SK-N-SH (cell line): ENCODE measurements at regions of chr7 and their contacts with region 1.

Region 1: DNA sequence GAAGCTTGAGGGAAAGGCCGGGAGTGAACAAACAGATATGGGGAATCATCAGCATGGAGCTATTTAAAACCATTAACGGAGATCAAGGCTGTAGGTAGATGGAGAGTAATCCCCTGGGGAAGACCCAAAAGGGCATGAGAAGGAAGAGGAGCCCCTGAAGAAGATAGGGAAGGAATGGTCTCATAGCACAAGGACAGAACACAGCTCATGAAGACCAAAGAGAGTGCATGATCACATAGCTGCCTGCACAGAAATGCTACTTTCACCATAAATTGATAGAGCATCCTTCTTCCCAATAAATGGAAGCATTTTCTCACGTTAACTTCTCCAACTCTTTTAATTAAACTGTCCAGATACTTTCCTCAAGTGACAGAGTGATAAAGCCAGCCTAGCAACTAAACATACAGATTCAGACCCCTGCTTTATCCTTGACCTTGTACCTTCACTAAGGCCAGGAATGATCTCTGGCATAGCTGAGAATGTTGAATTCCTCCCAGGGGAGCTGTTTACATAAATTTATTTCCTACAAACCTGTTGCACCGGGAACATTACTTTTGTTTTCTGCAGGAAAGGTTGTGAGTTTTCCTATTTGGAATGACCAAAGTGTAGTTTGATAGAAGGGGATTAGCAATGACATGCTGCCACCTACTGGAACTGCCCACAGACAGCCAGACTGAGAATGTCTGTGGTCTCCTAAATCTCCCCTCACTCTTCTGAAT is 110.8 kb upstream of the LRGUK start:
- DNase-seq: peak; percentile 67
- H3K4me3 ChIP-seq: peak overlapping the region in 1 of 2 experiments; percentile 17; a peak in 1 of 4 replicates
- H3K27ac ChIP-seq: peak overlapping the region in 1 of 2 experiments; percentile 95; a peak in 2 of 4 replicates
- H3K4me1 ChIP-seq: peaks cover 0 to 25% of the 10 kb centered on the region in 2 experiments; a peak in 2 of 4 replicates
- H3K27me3 ChIP-seq: no peaks in the 10 kb centered on the region
- CTCF ChIP-seq: peak; percentile 95
- EP300 ChIP-seq: peak in 1 of 2 experiments; percentile 55; a peak in 1 of 4 replicates
- RAD21 ChIP-seq: peak; percentile 99

Region 2: DNA sequence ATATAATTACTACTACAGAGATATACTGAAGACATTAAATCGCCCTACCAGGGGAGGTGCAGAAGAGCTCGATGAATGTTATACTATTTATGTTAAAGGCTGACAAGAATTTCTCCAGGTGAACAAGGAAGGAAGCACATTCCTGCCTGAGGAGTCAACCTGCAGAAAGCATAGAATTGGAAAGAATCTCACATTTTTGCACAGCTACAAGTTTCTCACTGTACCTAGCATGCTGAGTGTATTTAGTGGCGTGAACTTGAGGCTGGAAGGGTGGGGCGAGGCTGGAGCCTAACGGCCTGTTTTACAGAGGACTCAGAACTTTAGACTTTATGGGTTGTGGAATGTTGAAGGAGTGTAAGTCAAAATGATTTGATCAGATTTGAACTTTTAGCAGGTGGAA is 262.9 kb before region 1 on chr7:
- CTCF ChIA-PET with region 1: interaction called, 31 read pairs
- POLR2A ChIA-PET with region 1: no interaction called
- DNase-seq: no peak
- H3K4me3 ChIP-seq: no peak overlapping the region
- H3K27ac ChIP-seq: peak overlapping the region in 1 of 2 experiments; percentile 100; a peak in 2 of 4 replicates
- H3K4me1 ChIP-seq: peaks cover 0 to 24% of the 10 kb centered on the region in 2 experiments; a peak in 2 of 4 replicates
- H3K27me3 ChIP-seq: no peaks in the 10 kb centered on the region
- CTCF ChIP-seq: no peak
- EP300 ChIP-seq: no peak
- RAD21 ChIP-seq: no peak

Region 3: DNA sequence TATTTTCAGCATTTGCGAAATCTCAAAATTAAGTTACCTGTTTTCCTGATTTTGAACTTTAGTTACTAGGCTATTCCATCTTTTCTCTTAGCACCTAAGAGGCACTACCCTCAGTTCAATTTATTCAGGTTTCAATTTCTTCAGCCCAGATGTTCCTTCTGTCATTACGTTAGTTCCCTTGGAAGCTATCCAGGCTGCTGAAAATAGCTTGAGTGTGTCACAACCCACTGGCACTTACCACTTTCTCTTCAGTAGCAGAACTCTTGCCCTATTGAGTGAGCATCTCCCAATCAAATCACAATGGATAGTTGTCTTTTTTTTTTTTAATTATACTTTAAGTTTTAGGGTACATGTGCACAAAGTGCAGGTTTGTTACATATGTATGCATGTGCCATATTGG is 221.9 kb before region 1 on chr7:
- CTCF ChIA-PET with region 1: interaction called, 56 read pairs
- POLR2A ChIA-PET with region 1: interaction called, 6 read pairs
- DNase-seq: no peak
- H3K4me3 ChIP-seq: no peak overlapping the region
- H3K27ac ChIP-seq: peak overlapping the region in 1 of 2 experiments; percentile 100; a peak in 2 of 4 replicates
- H3K4me1 ChIP-seq: peaks cover 11 to 49% of the 10 kb centered on the region in 2 experiments; a peak in 3 of 4 replicates
- H3K27me3 ChIP-seq: no peaks in the 10 kb centered on the region
- CTCF ChIP-seq: no peak
- EP300 ChIP-seq: peak in 1 of 2 experiments; percentile 40; a peak in 1 of 4 replicates
- RAD21 ChIP-seq: no peak

Region 4: GRCh38 chr7:133853706-133854276 is 162.6 kb before region 1 on chr7:
- CTCF ChIA-PET with region 1: interaction called, 39 read pairs
- POLR2A ChIA-PET with region 1: interaction called, 5 read pairs
- DNase-seq: peak; percentile 72
- H3K4me3 ChIP-seq: peak overlapping the region in 1 of 2 experiments; percentile 7; a peak in 2 of 4 replicates
- H3K27ac ChIP-seq: peak overlapping the region; percentile 85 to 98
- H3K4me1 ChIP-seq: peaks cover 30 to 53% of the 10 kb centered on the region in 2 experiments
- H3K27me3 ChIP-seq: no peaks in the 10 kb centered on the region
- CTCF ChIP-seq: peak; percentile 94
- EP300 ChIP-seq: peak; percentile 47 to 88
- RAD21 ChIP-seq: peak; percentile 78

Region 5: DNA sequence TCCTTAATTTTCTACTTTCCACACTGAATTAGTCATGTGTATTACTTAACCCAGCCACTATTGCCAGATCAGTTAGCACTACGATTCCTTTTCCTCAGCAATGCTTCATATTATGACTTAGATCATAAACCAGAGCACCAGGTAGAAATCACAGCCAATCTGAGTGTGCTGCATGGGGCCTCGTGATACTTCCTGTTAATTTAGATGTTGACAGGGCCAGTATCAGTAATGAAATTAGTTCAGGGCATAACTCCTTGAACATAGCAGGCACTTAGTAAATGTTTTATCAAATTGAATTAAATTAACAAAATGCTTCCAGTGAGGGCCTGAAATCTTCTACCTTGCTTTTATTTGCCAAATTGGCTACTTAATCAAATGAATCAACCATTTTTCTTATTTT is 58.5 kb before region 1 on chr7:
- CTCF ChIA-PET with region 1: interaction called, 12 read pairs
- POLR2A ChIA-PET with region 1: no interaction called
- DNase-seq: peak; percentile 66
- H3K4me3 ChIP-seq: no peak overlapping the region
- H3K27ac ChIP-seq: peak overlapping the region in 1 of 2 experiments; percentile 98; a peak in 2 of 4 replicates
- H3K4me1 ChIP-seq: peaks cover 0 to 41% of the 10 kb centered on the region in 2 experiments; a peak in 2 of 4 replicates
- H3K27me3 ChIP-seq: no peaks in the 10 kb centered on the region
- CTCF ChIP-seq: no peak
- EP300 ChIP-seq: peak in 1 of 2 experiments; percentile 95; a peak in 2 of 4 replicates
- RAD21 ChIP-seq: peak; percentile 34; the same call in 1 of the 2 replicates

Region 6: DNA sequence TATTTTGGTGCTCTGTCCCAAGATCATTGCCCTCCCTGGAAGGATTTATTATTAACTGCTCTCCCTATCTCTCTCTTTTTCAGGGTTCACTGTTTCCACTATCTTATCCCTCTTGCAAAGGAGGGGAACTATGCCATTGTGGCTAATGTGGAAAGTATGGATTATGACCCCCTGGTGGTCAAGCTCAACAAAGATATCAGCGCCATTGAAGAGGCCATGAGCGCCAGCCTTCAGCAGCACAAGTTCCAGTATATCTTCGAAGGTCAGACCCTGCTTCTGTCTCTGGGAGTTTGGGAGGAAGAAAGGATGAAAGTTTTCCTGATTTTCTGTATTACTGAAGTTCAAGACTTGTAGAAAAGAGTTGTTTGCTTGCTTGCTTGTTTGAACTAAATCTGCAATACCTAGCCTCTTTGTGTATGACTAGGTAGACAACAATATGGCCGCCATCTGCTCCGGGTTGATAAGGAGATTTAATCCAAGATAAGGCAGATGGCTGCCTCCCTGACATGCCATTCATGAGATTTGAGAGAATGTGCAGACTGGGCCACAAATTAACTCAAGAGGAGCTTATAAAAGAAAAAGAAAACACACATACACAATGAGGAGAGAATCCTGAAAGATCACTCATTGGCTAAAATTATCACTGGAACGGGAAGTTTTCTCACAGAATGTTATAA is 11.4 kb before region 1 on chr7:
- CTCF ChIA-PET with region 1: interaction called, 17 read pairs
- POLR2A ChIA-PET with region 1: no interaction called
- DNase-seq: no peak
- H3K4me3 ChIP-seq: no peak overlapping the region
- H3K27ac ChIP-seq: peak overlapping the region in 1 of 2 experiments; percentile 86; a peak in 2 of 4 replicates
- H3K4me1 ChIP-seq: peaks cover 0 to 21% of the 10 kb centered on the region in 2 experiments; a peak in 2 of 4 replicates
- H3K27me3 ChIP-seq: no peaks in the 10 kb centered on the region
- CTCF ChIP-seq: no peak; the same call in 1 of the 2 replicates
- EP300 ChIP-seq: peak in 1 of 2 experiments; percentile 51; a peak in 1 of 4 replicates
- RAD21 ChIP-seq: no peak

Region 7: GRCh38 chr7:134047643-134048042 is 31.3 kb after region 1 on chr7:
- CTCF ChIA-PET with region 1: no interaction called
- POLR2A ChIA-PET with region 1: no interaction called
- DNase-seq: no peak
- H3K4me3 ChIP-seq: no peak overlapping the region
- H3K27ac ChIP-seq: no peak overlapping the region
- H3K4me1 ChIP-seq: peaks cover 0 to 9% of the 10 kb centered on the region in 2 experiments; a peak in 1 of 4 replicates
- H3K27me3 ChIP-seq: no peaks in the 10 kb centered on the region
- CTCF ChIP-seq: no peak
- EP300 ChIP-seq: no peak
- RAD21 ChIP-seq: no peak